BJ (cell line): ENCODE measurements at regions of chr7 and their contacts with region 1.

Region 1: DNA sequence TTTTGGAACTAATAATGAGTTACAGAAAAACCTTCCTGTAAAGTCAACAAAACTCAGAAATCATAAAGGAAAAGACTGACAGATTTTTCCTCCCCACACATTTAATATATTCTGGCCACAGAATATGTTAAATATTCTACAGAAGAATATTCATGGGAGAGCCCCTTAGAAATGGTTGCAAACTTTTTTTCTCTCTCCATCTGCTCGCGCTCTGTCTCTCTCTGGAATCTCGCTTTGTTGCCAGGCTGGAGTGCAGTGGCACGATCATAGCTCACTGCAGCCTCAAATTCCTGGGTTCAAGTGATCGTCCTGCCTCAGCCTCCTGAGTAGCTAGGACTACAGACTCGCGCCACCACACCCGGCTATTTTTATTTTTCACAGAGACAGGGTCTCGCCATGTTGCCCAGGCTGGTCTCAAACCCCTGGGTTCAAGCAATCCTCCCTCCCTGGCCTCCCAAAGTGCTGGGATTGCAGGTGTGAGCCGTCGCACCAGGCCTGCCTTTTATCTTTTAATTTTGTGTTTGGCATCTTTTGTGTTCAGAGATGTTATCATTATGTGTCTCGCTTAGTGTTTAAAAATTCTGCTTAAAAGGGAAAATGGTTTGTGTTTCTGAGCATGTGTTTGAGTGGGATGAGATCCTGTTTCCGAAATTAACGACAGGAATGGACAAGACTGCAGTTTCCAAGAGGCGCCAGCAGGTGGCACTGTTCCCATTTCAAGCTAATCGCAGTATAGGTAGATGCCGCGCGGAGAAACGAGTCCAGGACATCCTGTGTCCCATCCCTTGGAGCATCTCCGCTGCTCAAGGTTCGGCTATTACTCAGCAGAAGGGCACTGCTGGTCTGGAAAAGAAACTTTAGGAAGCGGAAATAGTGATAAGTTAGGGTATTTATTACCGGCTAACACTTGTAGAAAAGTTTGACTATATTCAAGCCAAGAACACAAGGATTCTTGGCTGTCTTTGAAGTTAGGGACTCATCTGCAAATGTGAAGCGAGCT is 23.1 kb upstream of the ST7 start:
- DNase-seq: no peak
- H3K4me3 ChIP-seq: no peak overlapping the region
- H3K27me3 ChIP-seq: no peaks in the 10 kb centered on the region
- CTCF ChIP-seq: peak; percentile 90

Region 2: DNA sequence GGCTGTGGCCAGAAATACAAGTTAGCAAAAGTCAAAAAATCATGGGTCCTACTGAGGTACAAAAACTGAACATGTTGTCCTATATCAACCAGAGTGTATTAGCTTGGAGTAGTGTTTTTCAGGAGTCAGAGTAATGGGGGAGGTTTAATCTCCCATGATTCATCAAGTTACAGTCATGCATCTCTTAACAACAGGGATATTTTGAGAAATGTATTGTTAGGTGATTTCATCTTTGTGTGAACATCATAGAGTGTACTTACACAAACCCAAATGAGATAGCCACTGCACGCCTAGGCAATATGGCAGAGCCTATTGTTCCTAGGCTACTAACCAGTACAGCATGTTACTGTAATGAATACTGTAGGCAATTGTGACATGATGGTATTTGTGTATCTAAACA is 734.8 kb before region 1 on chr7:
- CTCF ChIA-PET with region 1: no interaction called
- POLR2A ChIA-PET with region 1: no interaction called
- DNase-seq: no peak
- H3K4me3 ChIP-seq: no peak overlapping the region
- H3K27me3 ChIP-seq: no peaks in the 10 kb centered on the region
- CTCF ChIP-seq: no peak

Region 3: DNA sequence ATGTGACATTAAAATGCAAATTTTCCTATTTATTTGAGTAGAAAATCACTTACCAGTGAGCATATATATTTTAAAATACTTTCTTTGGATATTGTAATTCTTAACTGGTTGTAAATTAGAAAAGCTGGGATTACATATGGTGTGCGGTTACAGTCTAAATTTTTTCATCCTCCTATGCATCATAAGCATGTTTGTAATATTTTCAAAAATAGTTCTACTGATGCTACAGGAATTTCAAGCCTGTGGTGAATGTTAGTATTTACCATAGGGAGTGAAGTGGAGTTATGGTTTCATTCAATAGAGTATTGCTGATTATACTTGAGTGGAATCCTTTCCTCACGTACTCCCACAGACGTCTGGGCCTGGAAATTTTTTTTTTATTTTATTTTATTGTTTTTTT is 11.5 kb before region 1 on chr7:
- CTCF ChIA-PET with region 1: interaction called, 11 read pairs
- POLR2A ChIA-PET with region 1: no interaction called
- DNase-seq: no peak
- H3K4me3 ChIP-seq: no peak overlapping the region
- H3K27me3 ChIP-seq: no peaks in the 10 kb centered on the region
- CTCF ChIP-seq: no peak

Region 4: GRCh38 chr7:117119192-117119924 is 189.1 kb after region 1 on chr7:
- CTCF ChIA-PET with region 1: interaction called, 60 read pairs
- POLR2A ChIA-PET with region 1: no interaction called
- DNase-seq: no peak
- H3K4me3 ChIP-seq: no peak overlapping the region
- H3K27me3 ChIP-seq: no peaks in the 10 kb centered on the region
- CTCF ChIP-seq: peak; percentile 82

Region 5: DNA sequence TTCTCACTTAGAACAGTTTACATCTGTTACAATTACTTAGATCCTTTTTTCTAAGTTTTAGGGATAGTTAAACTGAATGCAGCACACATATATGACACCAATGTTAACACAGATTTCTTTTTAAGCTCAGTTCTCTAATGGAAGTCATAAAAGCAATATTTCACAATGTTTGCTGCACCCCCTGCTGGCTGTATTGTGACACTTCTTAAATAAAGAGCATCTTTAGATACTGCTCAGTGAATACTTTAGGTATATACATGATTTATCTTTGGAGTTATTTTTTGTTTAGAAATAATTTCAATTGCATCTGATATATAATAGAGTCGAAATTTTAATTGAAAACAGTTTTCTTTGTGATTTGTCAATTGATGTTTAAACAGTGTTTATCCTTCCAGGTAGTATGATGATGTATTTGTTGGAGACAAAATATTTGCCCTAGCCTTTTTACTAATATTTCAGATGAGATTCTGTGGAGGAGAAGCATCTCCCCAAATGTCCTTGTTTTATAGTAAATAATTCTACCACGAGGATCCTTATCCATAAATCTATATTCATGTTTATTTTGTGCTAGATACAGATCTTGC is 197.5 kb after region 1 on chr7:
- CTCF ChIA-PET with region 1: interaction called, 60 read pairs
- POLR2A ChIA-PET with region 1: no interaction called
- DNase-seq: peak; percentile 11
- H3K4me3 ChIP-seq: no peak overlapping the region
- H3K27me3 ChIP-seq: no peaks in the 10 kb centered on the region
- CTCF ChIP-seq: peak; percentile 70